ENCODE measurements at regions of chr10 and their contacts with region 1.

Region 1: GRCh38 chr10:93687737-93688136 is 14.7 kb downstream of the FRA10AC1 start:
- DNase-seq: no peak
- H3K4me3 ChIP-seq: no peak overlapping the region
- H3K27ac ChIP-seq: no peak overlapping the region
- H3K4me1 ChIP-seq: no peaks in the 10 kb centered on the region
- H3K27me3 ChIP-seq: no peaks in the 10 kb centered on the region
- CTCF ChIP-seq: no peak

Region 2: DNA sequence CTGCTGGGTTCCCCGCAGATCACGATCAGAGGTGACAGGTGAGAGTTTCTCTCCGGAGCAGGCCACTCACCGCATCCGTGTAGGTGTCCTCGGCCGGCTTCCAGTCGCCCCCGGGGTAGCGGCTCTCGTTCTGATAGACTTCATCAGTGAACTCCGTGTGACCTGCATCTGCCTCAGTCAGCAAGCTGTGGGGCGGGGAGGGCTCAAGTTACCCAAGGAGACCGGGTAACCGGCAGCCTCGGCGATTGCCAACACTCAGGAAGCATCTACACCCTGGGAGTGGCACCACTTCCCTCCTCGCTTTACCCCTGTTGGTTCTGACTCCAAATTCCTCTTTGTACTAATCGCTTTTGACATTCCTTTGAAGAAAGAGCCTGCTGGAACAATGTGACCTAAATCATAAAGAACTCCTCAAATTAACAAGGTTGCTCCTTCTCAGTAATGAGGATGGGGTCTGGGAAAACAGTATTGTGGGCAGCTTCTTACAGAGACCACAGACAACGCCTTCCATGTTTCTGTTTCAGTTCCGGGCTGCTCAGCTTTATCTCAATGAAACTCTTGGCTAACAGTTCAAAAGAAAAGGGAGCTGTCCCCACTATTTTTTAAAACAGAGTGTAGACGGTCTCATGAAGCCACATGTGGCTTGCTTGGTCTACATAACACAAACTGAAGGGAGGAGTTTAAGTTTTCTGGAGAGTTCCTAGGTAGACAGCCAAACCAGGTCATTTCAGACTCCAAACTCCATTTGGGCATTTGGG is 323.7 kb before region 1 on chr10:
- CTCF ChIA-PET with region 1: interaction called, 13 read pairs
- POLR2A ChIA-PET with region 1: no interaction called
- intact Hi-C with region 1: loop called (anchors 10 kb)
- DNase-seq: peak; percentile 64 to 68
- H3K4me3 ChIP-seq: no peak overlapping the region
- H3K27ac ChIP-seq: 0 out of 2 replicates have a peak overlapping the region, but pooled peaks have one; percentile 9
- H3K4me1 ChIP-seq: no peaks in the 10 kb centered on the region
- H3K27me3 ChIP-seq: no peaks in the 10 kb centered on the region
- CTCF ChIP-seq: no peak

Region 3: GRCh38 chr10:93773120-93773519 is 85.4 kb after region 1 on chr10:
- CTCF ChIA-PET with region 1: no interaction called
- POLR2A ChIA-PET with region 1: interaction called, 13 read pairs
- intact Hi-C with region 1: no loop called
- DNase-seq: no peak
- H3K4me3 ChIP-seq: no peak overlapping the region
- H3K27ac ChIP-seq: no peak overlapping the region
- H3K4me1 ChIP-seq: no peaks in the 10 kb centered on the region
- H3K27me3 ChIP-seq: no peaks in the 10 kb centered on the region
- CTCF ChIP-seq: no peak

Measured in PC-9 (cell line).